Activated CD4-positive, alpha-beta memory T cell treated with anti-CD3 and anti-CD28 coated beads for 36 hours (primary cell): ENCODE measurements at regions of chr12 and their contacts with region 1.

Region 1: GRCh38 chr12:66860752-66861750 is 182.2 kb upstream of the GRIP1 start:
- DNase-seq: peak; percentile 73
- H3K4me3 Mint-ChIP-seq: no peak overlapping the region
- H3K27ac Mint-ChIP-seq: no peak overlapping the region
- H3K4me1 Mint-ChIP-seq: no peaks in the 10 kb centered on the region
- H3K27me3 Mint-ChIP-seq: peaks cover 3% of the 10 kb centered on the region

Region 2: GRCh38 chr12:66688846-66689439 is 172.1 kb before region 1 on chr12:
- CTCF ChIA-PET with region 1: interaction called, 16 read pairs
- POLR2A ChIA-PET with region 1: no interaction called
- intact Hi-C with region 1: loop called (anchors 1 kb)
- DNase-seq: peak; percentile 21
- H3K4me3 Mint-ChIP-seq: no peak overlapping the region
- H3K27ac Mint-ChIP-seq: no peak overlapping the region
- H3K4me1 Mint-ChIP-seq: no peaks in the 10 kb centered on the region
- H3K27me3 Mint-ChIP-seq: peaks cover 12% of the 10 kb centered on the region

Region 3: DNA sequence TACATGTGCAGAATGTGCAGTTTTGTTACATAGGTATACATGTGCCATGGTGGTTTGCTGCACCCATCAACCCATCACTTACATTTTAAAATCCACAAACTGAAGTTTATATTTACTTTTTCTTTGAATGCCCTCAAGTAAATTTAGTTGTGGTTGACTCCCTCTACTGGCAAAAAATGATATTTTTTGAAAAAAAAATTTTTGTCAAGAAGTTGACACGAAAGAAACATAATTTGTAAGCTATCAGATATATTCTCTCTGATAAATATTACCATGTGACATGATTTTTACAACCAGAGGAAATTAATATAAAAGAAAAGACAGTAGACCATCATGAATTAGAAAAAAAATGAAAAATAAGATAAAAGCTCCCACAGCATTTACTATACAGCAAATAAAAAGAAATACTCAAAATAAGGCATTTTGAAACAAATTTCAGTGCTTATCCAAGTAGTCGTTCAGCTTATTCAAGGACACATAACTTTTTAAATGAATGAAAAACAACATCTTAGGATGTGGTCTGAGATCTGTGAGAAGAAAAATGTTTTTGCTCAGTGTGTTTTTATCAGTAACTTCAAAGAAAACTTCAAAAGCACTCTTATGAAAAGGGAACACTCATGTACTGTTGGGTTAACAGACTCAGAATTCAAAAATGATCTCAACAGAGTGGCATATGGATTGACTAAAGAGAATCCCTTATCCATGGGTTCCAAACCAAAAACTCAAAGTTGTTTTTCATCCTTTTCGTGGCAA is 152.2 kb before region 1 on chr12:
- CTCF ChIA-PET with region 1: interaction called, 19 read pairs
- POLR2A ChIA-PET with region 1: no interaction called
- intact Hi-C with region 1: no loop called
- DNase-seq: no peak
- H3K4me3 Mint-ChIP-seq: no peak overlapping the region
- H3K27ac Mint-ChIP-seq: no peak overlapping the region
- H3K4me1 Mint-ChIP-seq: peaks cover 16% of the 10 kb centered on the region
- H3K27me3 Mint-ChIP-seq: peaks cover 2% of the 10 kb centered on the region

Region 4: GRCh38 chr12:66717036-66717673 is 143.9 kb before region 1 on chr12:
- CTCF ChIA-PET with region 1: no interaction called
- POLR2A ChIA-PET with region 1: no interaction called
- intact Hi-C with region 1: loop called (anchors 1 kb)
- DNase-seq: no peak
- H3K4me3 Mint-ChIP-seq: no peak overlapping the region
- H3K27ac Mint-ChIP-seq: no peak overlapping the region
- H3K4me1 Mint-ChIP-seq: peaks cover 11% of the 10 kb centered on the region
- H3K27me3 Mint-ChIP-seq: no peaks in the 10 kb centered on the region